CD8-positive, alpha-beta T cell (primary cell): ENCODE measurements at regions of chr5 and their contacts with region 1.

Region 1: GRCh38 chr5:122774861-122775549 is at the start of gene SNX2:
- DNase-seq: peak; percentile 77 to 94 (median 89)
- ATAC-seq: peak; percentile 85
- H3K4me3 ChIP-seq: peak within 1 kb of the TSS; percentile 72 to 89
- H3K4me3 Mint-ChIP-seq: peak within 1 kb of the TSS; percentile 93
- H3K27ac ChIP-seq: peak within 1 kb of the TSS; percentile 83 to 87
- H3K27ac Mint-ChIP-seq: peak within 1 kb of the TSS; percentile 95
- H3K4me1 ChIP-seq: peaks cover 34% of the 10 kb centered on the region
- H3K4me1 Mint-ChIP-seq: peaks cover 51% of the 10 kb centered on the region
- H3K27me3 ChIP-seq: no peaks in the 10 kb centered on the region
- H3K27me3 Mint-ChIP-seq: peaks cover 4% of the 10 kb centered on the region
- CTCF ChIP-seq: peak; percentile 44
- total RNA-seq, gene SNX2: 68.6 to 76.3 TPM

Region 2: DNA sequence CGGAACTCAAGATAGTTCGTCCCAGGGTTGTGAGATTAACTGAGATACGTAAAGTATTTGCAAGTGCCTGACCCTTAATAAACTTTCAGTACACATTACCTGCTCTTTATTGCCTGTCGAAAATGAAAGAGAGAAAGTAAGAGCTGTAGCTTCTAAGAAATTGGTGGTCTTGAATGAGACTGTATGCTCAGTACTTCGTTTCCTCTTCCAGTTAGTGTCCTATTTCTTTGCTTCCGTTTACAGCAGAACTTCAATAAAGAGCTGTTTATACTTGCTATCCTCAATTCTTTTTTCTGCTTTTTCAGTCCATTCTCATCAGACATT is 812.7 kb before region 1 on chr5:
- CTCF ChIA-PET with region 1: no interaction called
- POLR2A ChIA-PET with region 1: interaction called, 3 read pairs
- intact Hi-C with region 1: loop called (anchors 2 to 5 kb)
- DNase-seq: no peak
- ATAC-seq: no peak
- H3K4me3 ChIP-seq: peak overlapping the region; percentile 87
- H3K4me3 Mint-ChIP-seq: peak overlapping the region; percentile 96
- H3K27ac ChIP-seq: peak overlapping the region; percentile 74 to 79
- H3K27ac Mint-ChIP-seq: peak overlapping the region; percentile 94
- H3K4me1 ChIP-seq: peaks cover 12% of the 10 kb centered on the region
- H3K4me1 Mint-ChIP-seq: peaks cover 44% of the 10 kb centered on the region
- H3K27me3 ChIP-seq: no peaks in the 10 kb centered on the region
- H3K27me3 Mint-ChIP-seq: peaks cover 10% of the 10 kb centered on the region
- CTCF ChIP-seq: no peak

Region 3: DNA sequence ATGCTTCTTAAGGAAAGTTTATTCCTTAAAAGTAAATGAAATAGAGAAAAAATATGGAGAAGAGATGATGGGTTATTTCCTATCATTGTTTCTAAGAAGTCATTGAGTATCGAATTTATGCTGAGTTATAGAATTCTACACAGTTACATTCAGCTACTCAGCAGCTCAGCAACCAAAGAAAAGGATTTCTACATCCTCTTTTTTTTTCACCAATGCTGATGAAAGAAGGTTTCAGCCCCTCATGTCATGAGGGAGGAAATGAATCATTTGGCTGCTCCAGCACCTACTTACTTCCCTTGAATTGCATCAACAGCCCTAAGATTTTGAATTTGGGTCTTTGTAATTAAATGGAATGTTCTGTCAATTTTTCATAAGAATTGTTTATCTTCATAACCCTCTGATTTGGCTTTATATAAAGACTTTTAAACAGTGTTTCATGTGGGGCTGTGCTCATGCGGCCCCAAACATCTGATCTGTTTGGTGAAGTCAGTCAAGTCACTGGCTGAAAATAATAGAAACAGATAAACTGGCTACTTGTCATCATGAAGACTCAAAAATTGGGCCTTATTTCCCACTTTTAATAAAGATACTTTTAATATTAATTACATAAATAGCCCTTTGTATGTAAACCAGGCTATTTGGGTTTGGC is 18.6 kb before region 1 on chr5:
- CTCF ChIA-PET with region 1: no interaction called
- POLR2A ChIA-PET with region 1: no interaction called
- intact Hi-C with region 1: no loop called
- DNase-seq: no peak
- ATAC-seq: no peak
- H3K4me3 ChIP-seq: no peak overlapping the region
- H3K4me3 Mint-ChIP-seq: no peak overlapping the region
- H3K27ac ChIP-seq: no peak overlapping the region
- H3K27ac Mint-ChIP-seq: no peak overlapping the region
- H3K4me1 ChIP-seq: no peaks in the 10 kb centered on the region
- H3K4me1 Mint-ChIP-seq: no peaks in the 10 kb centered on the region
- H3K27me3 ChIP-seq: no peaks in the 10 kb centered on the region
- H3K27me3 Mint-ChIP-seq: peaks cover 14% of the 10 kb centered on the region
- CTCF ChIP-seq: no peak

Region 4: DNA sequence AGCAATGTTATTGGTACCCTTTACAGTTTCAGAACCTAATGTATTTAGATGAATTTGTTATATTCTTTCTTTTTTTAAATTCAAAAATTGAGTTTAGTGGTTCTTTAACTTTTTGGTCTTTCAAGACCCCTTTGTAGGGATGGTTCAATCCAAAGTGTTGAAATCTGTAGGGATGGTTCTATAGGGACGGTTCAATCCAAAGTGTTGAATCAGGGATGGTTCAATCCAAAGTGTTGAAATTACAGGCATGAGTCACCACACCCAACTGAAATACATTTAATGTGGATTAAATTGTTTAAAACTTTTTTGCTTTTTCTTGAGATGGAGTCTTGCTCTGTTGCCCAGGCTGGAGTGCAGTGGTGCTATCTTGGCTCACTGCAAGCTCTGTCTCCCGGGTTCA is 30.5 kb after region 1 on chr5:
- CTCF ChIA-PET with region 1: no interaction called
- POLR2A ChIA-PET with region 1: no interaction called
- intact Hi-C with region 1: loop called in 1 of 2 experiments (anchors 5 kb)
- DNase-seq: no peak
- ATAC-seq: no peak
- H3K4me3 ChIP-seq: no peak overlapping the region
- H3K4me3 Mint-ChIP-seq: no peak overlapping the region
- H3K27ac ChIP-seq: no peak overlapping the region
- H3K27ac Mint-ChIP-seq: no peak overlapping the region
- H3K4me1 ChIP-seq: no peaks in the 10 kb centered on the region
- H3K4me1 Mint-ChIP-seq: no peaks in the 10 kb centered on the region
- H3K27me3 ChIP-seq: no peaks in the 10 kb centered on the region
- H3K27me3 Mint-ChIP-seq: no peaks in the 10 kb centered on the region
- CTCF ChIP-seq: no peak

Region 5: GRCh38 chr5:122831984-122832383 is 57.0 kb after region 1 on chr5:
- CTCF ChIA-PET with region 1: no interaction called
- POLR2A ChIA-PET with region 1: no interaction called
- intact Hi-C with region 1: loop called in 1 of 2 experiments (anchors 5 kb)
- DNase-seq: no peak
- ATAC-seq: no peak
- H3K4me3 ChIP-seq: no peak overlapping the region
- H3K4me3 Mint-ChIP-seq: no peak overlapping the region
- H3K27ac ChIP-seq: no peak overlapping the region
- H3K27ac Mint-ChIP-seq: no peak overlapping the region
- H3K4me1 ChIP-seq: no peaks in the 10 kb centered on the region
- H3K4me1 Mint-ChIP-seq: no peaks in the 10 kb centered on the region
- H3K27me3 ChIP-seq: no peaks in the 10 kb centered on the region
- H3K27me3 Mint-ChIP-seq: no peaks in the 10 kb centered on the region
- CTCF ChIP-seq: no peak

Region 6: DNA sequence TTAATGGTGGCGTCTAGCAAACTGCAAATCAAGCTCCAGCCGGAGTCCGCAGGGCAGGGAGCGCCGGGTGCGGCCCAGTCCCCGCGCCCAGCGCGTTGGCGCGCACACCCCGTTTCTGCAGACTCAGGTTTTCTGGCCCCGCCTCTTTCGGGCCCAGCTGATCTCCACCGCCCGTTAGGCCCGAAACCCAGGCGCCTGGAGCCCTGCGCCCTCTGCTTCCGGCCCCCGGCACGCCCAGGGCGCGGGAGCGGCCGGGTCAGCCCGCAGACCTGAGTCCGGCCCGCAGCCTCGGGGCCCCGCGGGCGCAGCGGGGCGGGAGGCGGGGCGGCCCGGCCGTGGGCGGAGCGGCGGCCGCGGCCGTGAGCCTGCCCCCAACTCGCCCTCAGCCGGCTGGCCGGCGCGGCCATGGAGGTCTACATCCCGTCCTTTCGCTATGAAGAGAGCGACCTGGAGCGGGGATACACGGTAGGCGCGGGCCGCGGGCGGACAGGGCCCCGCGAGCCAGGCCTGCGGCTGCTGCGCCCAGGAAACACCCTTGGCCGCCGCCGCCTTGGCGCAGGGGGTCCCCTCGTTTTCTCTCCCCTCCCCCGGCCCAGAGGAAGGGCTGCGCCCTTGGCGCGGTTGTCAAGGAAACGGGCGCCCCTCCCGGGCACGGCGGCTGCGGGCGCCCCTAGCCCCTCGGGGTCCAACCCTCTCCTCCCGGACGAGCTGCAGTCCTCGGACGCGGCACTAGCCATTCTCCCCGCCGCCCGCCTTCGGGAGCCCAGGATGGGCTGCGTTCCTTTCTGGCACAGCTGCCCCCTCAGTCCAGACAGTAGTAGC is 70.4 kb after region 1 on chr5 and contains the start of gene SNX24:
- CTCF ChIA-PET with region 1: interaction called, 5 read pairs
- POLR2A ChIA-PET with region 1: interaction called, 10 read pairs
- intact Hi-C with region 1: loop called (anchors 1 to 2 kb)
- DNase-seq: peak; percentile 31 to 86 (median 70)
- ATAC-seq: peak; percentile 83
- H3K4me3 ChIP-seq: peak within 1 kb of the TSS; percentile 62 to 67
- H3K4me3 Mint-ChIP-seq: peak within 1 kb of the TSS; percentile 90
- H3K27ac ChIP-seq: peak within 1 kb of the TSS; percentile 35 to 71
- H3K27ac Mint-ChIP-seq: peak within 1 kb of the TSS; percentile 79
- H3K4me1 ChIP-seq: peaks cover 11% of the 10 kb centered on the region
- H3K4me1 Mint-ChIP-seq: peaks cover 27% of the 10 kb centered on the region
- H3K27me3 ChIP-seq: no peaks in the 10 kb centered on the region
- H3K27me3 Mint-ChIP-seq: peaks cover 9% of the 10 kb centered on the region
- CTCF ChIP-seq: no peak
- total RNA-seq, gene SNX24: 0.33 to 0.87 TPM